ENCODE measurements at regions of chr14 and their contacts with region 1.

Region 1: GRCh38 chr14:88667555-88668273 is 104.9 kb downstream of the ZC3H14 start:
- DNase-seq: peak; percentile 59
- ATAC-seq: peak; percentile 73
- H3K4me3 Mint-ChIP-seq: no peak overlapping the region
- H3K27ac Mint-ChIP-seq: no peak overlapping the region
- H3K4me1 Mint-ChIP-seq: peaks cover 2% of the 10 kb centered on the region
- H3K27me3 Mint-ChIP-seq: no peaks in the 10 kb centered on the region

Region 2: GRCh38 chr14:88470542-88471440 is 196.9 kb before region 1 on chr14:
- CTCF ChIA-PET with region 1: no interaction called
- DNase-seq: no peak
- ATAC-seq: no peak
- H3K4me3 Mint-ChIP-seq: no peak overlapping the region
- H3K27ac Mint-ChIP-seq: no peak overlapping the region
- H3K4me1 Mint-ChIP-seq: no peaks in the 10 kb centered on the region
- H3K27me3 Mint-ChIP-seq: no peaks in the 10 kb centered on the region

Region 3: GRCh38 chr14:88682495-88683114 is 14.9 kb after region 1 on chr14:
- CTCF ChIA-PET with region 1: interaction called, 11 read pairs
- DNase-seq: peak; percentile 47
- ATAC-seq: peak; percentile 45
- H3K4me3 Mint-ChIP-seq: no peak overlapping the region
- H3K27ac Mint-ChIP-seq: no peak overlapping the region
- H3K4me1 Mint-ChIP-seq: peaks cover 7% of the 10 kb centered on the region
- H3K27me3 Mint-ChIP-seq: no peaks in the 10 kb centered on the region